Activated CD4-positive, alpha-beta T cell treated with anti-CD3 and anti-CD28 coated beads for 36 hours (primary cell): ENCODE measurements at regions of chr14 and their contacts with region 1.

Region 1: GRCh38 chr14:59189786-59190771 is 1.6 kb downstream of the DAAM1 start:
- DNase-seq: peak; percentile 88
- ATAC-seq: peak; percentile 9
- H3K4me3 Mint-ChIP-seq: peak overlapping the region; percentile 93
- H3K27ac Mint-ChIP-seq: peak overlapping the region; percentile 63
- H3K4me1 Mint-ChIP-seq: peaks cover 13% of the 10 kb centered on the region
- H3K27me3 Mint-ChIP-seq: peaks cover 6% of the 10 kb centered on the region

Region 2: GRCh38 chr14:58427281-58428117 is 762.6 kb before region 1 on chr14 and contains the starts of genes KIAA0586 and TIMM9:
- CTCF ChIA-PET with region 1: no interaction called
- POLR2A ChIA-PET with region 1: no interaction called
- intact Hi-C with region 1: loop called (anchors 1 to 10 kb)
- DNase-seq: peak; percentile 98
- ATAC-seq: peak; percentile 77
- H3K4me3 Mint-ChIP-seq: peak within 1 kb of the TSS; percentile 97
- H3K27ac Mint-ChIP-seq: peak within 1 kb of the TSS; percentile 99
- H3K4me1 Mint-ChIP-seq: peaks cover 45% of the 10 kb centered on the region
- H3K27me3 Mint-ChIP-seq: no peaks in the 10 kb centered on the region
- total RNA-seq, gene KIAA0586: 32.0 to 38.4 TPM
- total RNA-seq, gene TIMM9: 72.6 to 109 TPM

Region 3: GRCh38 chr14:59126710-59127432 is 63.2 kb before region 1 on chr14:
- CTCF ChIA-PET with region 1: no interaction called
- POLR2A ChIA-PET with region 1: no interaction called
- intact Hi-C with region 1: loop called in 1 of 2 experiments (anchors 1 kb)
- DNase-seq: peak; percentile 33
- ATAC-seq: peak; percentile 77
- H3K4me3 Mint-ChIP-seq: no peak overlapping the region
- H3K27ac Mint-ChIP-seq: no peak overlapping the region
- H3K4me1 Mint-ChIP-seq: no peaks in the 10 kb centered on the region
- H3K27me3 Mint-ChIP-seq: peaks cover 8% of the 10 kb centered on the region

Region 4: DNA sequence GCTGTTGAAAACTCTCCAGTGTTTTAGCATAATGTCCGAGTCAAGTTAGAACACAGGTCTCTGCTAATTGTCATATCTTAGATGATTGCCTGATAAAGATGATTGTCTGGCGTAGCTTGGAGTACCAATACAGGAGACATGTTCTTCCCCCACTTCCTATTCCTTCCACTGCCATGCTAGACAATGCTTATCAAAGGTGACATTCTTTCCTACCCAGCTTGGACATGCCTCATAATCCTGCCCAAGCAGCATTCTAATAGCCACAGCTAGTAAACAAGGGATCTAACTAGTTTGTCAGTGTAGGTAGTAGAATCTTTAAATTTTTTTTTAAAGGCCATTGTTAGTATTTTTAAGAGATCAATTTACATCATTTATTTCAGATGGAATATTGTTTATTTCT is 22.3 kb after region 1 on chr14:
- CTCF ChIA-PET with region 1: no interaction called
- POLR2A ChIA-PET with region 1: no interaction called
- intact Hi-C with region 1: no loop called
- DNase-seq: no peak
- ATAC-seq: no peak
- H3K4me3 Mint-ChIP-seq: no peak overlapping the region
- H3K27ac Mint-ChIP-seq: no peak overlapping the region
- H3K4me1 Mint-ChIP-seq: no peaks in the 10 kb centered on the region
- H3K27me3 Mint-ChIP-seq: no peaks in the 10 kb centered on the region

Region 5: DNA sequence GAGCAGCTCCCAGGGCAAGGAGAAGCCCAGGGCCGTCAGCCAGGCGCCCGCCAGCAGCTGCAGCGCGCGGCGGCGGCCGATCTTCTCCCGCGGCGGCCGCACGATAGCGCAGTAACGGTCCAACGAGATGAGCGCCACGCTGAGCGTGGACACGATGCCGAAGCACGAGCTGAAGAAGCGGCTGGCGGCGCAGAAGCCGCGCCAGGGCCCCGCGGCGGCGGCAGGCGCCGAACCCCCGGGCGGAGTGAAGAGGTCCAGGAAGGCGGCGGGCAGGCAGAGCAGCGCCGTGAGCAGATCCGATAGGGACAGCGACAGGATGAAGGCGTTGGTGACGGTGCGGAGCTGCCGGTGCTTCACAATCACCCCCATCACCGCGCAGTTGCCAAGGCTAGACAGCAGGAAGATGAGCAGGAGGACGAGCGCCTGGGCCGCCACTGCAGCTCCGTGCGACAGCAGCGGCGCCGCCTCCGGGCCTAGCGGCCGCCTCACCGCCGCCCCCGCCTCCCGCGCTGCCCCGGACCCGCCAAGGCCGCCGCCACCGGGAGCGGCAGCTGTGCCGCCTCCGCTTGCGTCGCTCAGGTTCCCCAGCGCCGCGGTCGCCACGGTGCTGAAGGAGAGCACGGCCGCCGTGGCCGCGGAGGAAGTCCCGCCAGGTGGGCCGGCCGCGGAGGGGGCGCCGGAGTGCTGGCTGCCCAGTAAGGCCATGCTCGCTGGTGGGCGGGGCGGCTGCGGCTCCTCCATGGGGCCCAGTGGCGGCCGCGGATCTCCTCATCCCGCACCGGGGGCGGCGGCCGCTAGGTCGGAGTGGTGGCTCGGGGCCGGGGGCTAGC is 274.6 kb after region 1 on chr14:
- CTCF ChIA-PET with region 1: no interaction called
- POLR2A ChIA-PET with region 1: no interaction called
- intact Hi-C with region 1: loop called in 1 of 2 experiments (anchors 1 kb)
- DNase-seq: peak; percentile 68
- ATAC-seq: peak; percentile 77
- H3K4me3 Mint-ChIP-seq: peak overlapping the region; percentile 73
- H3K27ac Mint-ChIP-seq: no peak overlapping the region
- H3K4me1 Mint-ChIP-seq: peaks cover 7% of the 10 kb centered on the region
- H3K27me3 Mint-ChIP-seq: peaks cover 3% of the 10 kb centered on the region

Region 6: GRCh38 chr14:59964251-59965007 is 774.4 kb after region 1 on chr14:
- CTCF ChIA-PET with region 1: no interaction called
- POLR2A ChIA-PET with region 1: no interaction called
- intact Hi-C with region 1: loop called in 1 of 2 experiments (anchors 5 kb)
- DNase-seq: peak; percentile 3
- ATAC-seq: peak; percentile 14
- H3K4me3 Mint-ChIP-seq: peak overlapping the region; percentile 82
- H3K27ac Mint-ChIP-seq: peak overlapping the region; percentile 95
- H3K4me1 Mint-ChIP-seq: peaks cover 19% of the 10 kb centered on the region
- H3K27me3 Mint-ChIP-seq: peaks cover 5% of the 10 kb centered on the region

Region 7: GRCh38 chr14:60248697-60249318 is 1058.7 kb after region 1 on chr14 and contains the start of gene PPM1A:
- CTCF ChIA-PET with region 1: no interaction called
- POLR2A ChIA-PET with region 1: no interaction called
- intact Hi-C with region 1: loop called (anchors 2 to 5 kb)
- DNase-seq: peak; percentile 97
- ATAC-seq: peak; percentile 73
- H3K4me3 Mint-ChIP-seq: peak within 1 kb of the TSS; percentile 94
- H3K27ac Mint-ChIP-seq: peak within 1 kb of the TSS; percentile 100
- H3K4me1 Mint-ChIP-seq: peaks cover 50% of the 10 kb centered on the region
- H3K27me3 Mint-ChIP-seq: no peaks in the 10 kb centered on the region
- total RNA-seq, gene PPM1A: 30.4 to 41.5 TPM